ENCODE measurements at regions of chr4 and their contacts with region 1.

Region 1: GRCh38 chr4:56977321-56978012 is at the start of gene NOA1:
- DNase-seq: peak; percentile 100
- H3K4me3 Mint-ChIP-seq: peak within 1 kb of the TSS; percentile 98
- H3K27ac Mint-ChIP-seq: peak within 1 kb of the TSS; percentile 98
- H3K4me1 Mint-ChIP-seq: peaks cover 50% of the 10 kb centered on the region
- H3K27me3 Mint-ChIP-seq: peaks cover 2% of the 10 kb centered on the region
- total RNA-seq, gene NOA1: 17.7 and 18.5 TPM in 2 replicates

Region 2: DNA sequence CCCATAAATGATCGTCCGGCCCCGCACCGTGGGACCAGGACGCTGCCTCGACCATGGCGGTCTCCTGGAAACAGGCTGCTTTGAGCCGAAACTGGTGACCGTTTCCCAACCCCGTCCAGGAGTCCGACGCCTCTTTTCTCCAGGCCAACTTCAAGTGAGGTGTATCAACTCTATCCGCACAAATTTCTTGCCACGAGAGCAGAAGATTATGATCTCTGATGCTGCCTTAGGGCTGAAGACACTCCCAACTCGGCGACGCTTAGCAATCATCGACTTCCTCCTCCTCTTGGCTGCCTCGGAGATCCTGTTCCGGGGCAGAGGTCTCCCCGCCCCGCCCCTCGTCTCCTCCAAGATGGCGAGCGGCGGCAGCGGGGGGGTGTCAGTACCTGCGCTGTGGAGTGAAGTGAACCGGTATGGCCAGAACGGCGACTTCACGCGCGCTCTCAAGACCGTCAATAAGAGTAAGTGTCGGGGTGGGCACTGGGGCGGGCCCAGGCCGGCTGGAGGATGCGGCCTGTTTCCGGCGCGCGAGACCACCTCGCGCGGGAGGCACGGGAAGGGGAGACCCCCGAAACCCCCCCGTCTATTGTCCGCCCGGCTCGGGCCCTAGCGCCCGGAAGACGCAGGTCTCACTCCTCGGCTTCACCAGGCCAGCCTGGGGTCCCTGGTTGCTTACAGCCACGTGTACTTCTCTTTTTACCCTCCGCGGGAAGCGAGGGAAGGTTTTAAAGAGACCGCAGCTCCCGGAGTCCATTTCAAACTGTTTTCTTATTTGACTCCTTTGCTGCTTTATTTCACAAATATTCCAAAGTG is 510.0 kb before region 1 on chr4 and contains the start of gene SRP72:
- intact Hi-C with region 1: loop called (anchors 2 kb)
- DNase-seq: peak; percentile 97
- H3K4me3 Mint-ChIP-seq: peak within 1 kb of the TSS; percentile 94
- H3K27ac Mint-ChIP-seq: peak within 1 kb of the TSS; percentile 95
- H3K4me1 Mint-ChIP-seq: peaks cover 45% of the 10 kb centered on the region
- H3K27me3 Mint-ChIP-seq: no peaks in the 10 kb centered on the region
- total RNA-seq, gene SRP72: 202 and 209 TPM in 2 replicates

Region 3: DNA sequence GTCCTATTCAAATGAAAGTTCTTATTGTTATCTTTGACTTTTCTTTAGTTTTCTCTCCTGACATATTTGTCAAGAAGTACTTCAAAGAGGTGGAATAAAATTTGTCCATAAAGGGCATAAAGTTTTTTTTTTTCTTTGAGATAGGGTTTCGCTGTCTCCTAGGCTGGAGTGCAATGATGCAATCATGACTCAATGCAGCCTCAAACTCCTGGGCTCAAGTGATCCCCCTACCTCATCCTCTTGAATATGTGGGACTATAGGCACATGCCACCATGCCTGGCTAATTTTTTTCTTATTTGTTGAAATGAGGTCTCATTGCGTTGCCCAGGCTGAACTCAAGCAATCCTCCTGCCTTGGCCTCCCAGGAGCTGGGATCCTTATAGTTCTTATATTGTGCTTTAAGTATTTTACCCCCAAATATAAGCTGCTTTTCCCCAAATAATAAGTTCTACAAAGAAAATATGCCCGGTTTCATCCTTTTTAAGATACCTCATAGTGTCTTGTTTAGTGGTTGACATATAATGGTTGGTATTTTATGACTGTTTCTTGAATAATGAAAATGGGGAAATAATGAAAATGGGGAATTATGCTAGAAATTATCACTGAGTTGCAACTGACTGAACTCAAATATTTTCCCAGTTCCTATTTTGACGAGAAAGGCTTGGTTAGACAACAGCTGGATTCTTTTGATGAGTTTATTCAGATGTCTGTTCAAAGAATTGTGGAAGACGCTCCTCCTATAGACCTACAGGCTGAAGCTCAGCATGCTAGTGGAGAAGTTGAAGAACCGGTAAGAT is 12.8 kb after region 1 on chr4:
- intact Hi-C with region 1: loop called (anchors 1 kb)
- DNase-seq: peak; percentile 33
- H3K4me3 Mint-ChIP-seq: no peak overlapping the region
- H3K27ac Mint-ChIP-seq: no peak overlapping the region
- H3K4me1 Mint-ChIP-seq: peaks cover 24% of the 10 kb centered on the region
- H3K27me3 Mint-ChIP-seq: no peaks in the 10 kb centered on the region